ENCODE measurements at regions of chr1 and their contacts with region 1.

Region 1: DNA sequence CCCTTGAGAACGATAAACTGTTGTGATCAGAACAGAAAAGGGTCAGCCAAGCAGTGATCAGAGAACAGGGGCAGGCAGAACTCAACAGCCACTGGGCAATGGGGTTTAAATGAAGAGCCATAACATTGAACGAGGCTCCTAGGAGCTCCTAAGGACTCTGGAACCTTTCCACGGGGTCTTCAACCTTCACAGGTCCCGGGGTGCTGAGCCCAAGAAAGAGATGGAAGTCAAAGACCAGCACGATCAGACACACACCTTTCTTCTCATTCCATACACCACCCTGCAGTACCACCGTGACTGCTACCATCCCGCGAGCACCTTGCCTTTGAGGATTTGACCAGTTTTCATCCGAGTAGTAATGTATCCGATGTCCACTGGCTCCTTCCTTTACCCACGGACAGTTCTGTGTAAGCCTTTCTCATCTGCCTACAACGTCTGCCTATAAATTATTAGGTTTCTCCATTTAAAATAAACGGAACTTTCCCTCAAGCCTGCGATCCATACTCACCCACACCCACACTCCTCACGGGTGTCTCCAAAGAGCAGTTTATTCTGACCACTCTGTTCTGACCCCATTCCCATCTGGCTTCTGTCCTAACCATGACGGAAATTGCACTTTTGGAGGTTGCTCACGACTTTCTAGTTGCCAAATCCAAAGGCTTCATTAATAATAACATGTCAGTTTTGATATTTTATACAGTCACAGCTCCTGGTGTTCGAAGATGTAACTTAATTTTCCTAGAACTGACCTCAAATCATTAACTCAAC is 16.8 kb upstream of the HHAT start:
- DNase-seq: no peak
- H3K4me3 ChIP-seq: no peak overlapping the region
- H3K27ac ChIP-seq: no peak overlapping the region
- H3K4me1 ChIP-seq: peaks cover 6% of the 10 kb centered on the region
- H3K27me3 ChIP-seq: peaks cover 0 to 2% of the 10 kb centered on the region in 2 experiments
- CTCF ChIP-seq: no peak
- POLR2A ChIP-seq: no peak

Region 2: DNA sequence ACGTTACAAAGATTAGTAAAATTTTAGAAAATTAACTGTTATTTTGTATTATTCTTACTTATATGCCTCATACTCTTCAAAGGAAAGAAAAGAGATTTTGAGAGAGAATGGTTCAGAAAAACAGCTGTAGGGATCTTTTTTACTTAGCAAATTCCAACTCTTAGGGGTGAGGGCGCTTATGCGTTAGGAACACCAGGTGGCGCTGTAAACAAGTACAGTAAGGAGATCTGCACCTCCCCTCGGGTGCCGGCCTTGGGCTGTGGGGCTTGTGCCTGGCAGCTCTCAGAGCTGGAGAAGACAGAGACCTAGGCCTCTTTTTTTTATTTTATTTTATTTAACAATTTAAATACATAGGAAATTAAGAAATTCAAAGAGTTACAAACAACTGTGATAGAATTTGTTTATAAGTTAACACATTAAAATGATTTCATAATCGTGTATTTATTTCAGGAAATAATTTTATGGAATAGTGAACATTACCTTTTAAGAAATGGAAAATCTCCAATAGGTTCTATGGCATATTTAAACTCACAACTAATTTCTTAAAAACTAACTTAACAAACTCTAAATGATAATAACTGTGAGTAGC is 451.5 kb before region 1 on chr1:
- CTCF ChIA-PET with region 1: no interaction called
- POLR2A ChIA-PET with region 1: no interaction called
- dilution Hi-C with region 1: no loop called
- intact Hi-C with region 1: loop called (anchors 1 kb)
- DNase-seq: peak; percentile 78
- H3K4me3 ChIP-seq: no peak overlapping the region
- H3K27ac ChIP-seq: no peak overlapping the region
- H3K4me1 ChIP-seq: peaks cover 2% of the 10 kb centered on the region
- H3K27me3 ChIP-seq: peaks cover 11% of the 10 kb centered on the region in 2 experiments
- CTCF ChIP-seq: peak; percentile 83 to 85
- POLR2A ChIP-seq: no peak

Region 3: GRCh38 chr1:209989525-209989924 is 322.4 kb before region 1 on chr1:
- CTCF ChIA-PET with region 1: no interaction called
- POLR2A ChIA-PET with region 1: no interaction called
- dilution Hi-C with region 1: no loop called
- intact Hi-C with region 1: loop called (anchors 1 kb)
- DNase-seq: peak; percentile 31
- H3K4me3 ChIP-seq: no peak overlapping the region
- H3K27ac ChIP-seq: no peak overlapping the region
- H3K4me1 ChIP-seq: no peaks in the 10 kb centered on the region
- H3K27me3 ChIP-seq: peaks cover 3 to 14% of the 10 kb centered on the region in 2 experiments
- CTCF ChIP-seq: no peak
- POLR2A ChIP-seq: no peak

Region 4: DNA sequence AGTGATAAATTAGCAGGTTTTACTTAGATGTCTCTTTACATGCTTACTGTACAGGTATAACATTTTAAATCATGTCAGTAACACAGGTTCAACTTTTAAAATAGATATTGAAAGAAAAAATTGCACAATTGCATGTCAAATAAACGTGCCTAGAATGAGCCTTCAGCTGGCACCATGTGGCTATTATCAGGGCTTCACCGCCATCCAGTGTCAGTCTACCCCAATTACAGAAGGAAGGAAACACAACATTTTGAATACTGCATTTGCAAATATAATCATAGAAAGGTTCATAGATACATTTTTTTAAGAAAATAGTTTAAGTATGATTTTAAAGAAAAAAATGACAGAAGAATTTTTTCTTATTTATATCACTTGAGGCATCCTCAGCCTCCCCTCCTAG is 126.8 kb before region 1 on chr1:
- CTCF ChIA-PET with region 1: no interaction called
- POLR2A ChIA-PET with region 1: no interaction called
- dilution Hi-C with region 1: no loop called
- intact Hi-C with region 1: no loop called
- DNase-seq: no peak
- H3K4me3 ChIP-seq: no peak overlapping the region
- H3K27ac ChIP-seq: no peak overlapping the region
- H3K4me1 ChIP-seq: no peaks in the 10 kb centered on the region
- H3K27me3 ChIP-seq: no peaks in the 10 kb centered on the region
- CTCF ChIP-seq: no peak
- POLR2A ChIP-seq: no peak

Region 5: GRCh38 chr1:210200124-210200736 is 111.7 kb before region 1 on chr1:
- CTCF ChIA-PET with region 1: interaction called, 14 read pairs
- POLR2A ChIA-PET with region 1: no interaction called
- dilution Hi-C with region 1: no loop called
- intact Hi-C with region 1: loop called (anchors 1 kb)
- DNase-seq: no peak
- H3K4me3 ChIP-seq: no peak overlapping the region
- H3K27ac ChIP-seq: no peak overlapping the region
- H3K4me1 ChIP-seq: no peaks in the 10 kb centered on the region
- H3K27me3 ChIP-seq: no peaks in the 10 kb centered on the region
- CTCF ChIP-seq: no peak
- POLR2A ChIP-seq: no peak

Region 6: GRCh38 chr1:210239349-210240111 is 72.4 kb before region 1 on chr1:
- CTCF ChIA-PET with region 1: interaction called, 7 read pairs
- POLR2A ChIA-PET with region 1: no interaction called
- dilution Hi-C with region 1: no loop called
- intact Hi-C with region 1: loop called (anchors 1 kb)
- DNase-seq: peak; percentile 92
- H3K4me3 ChIP-seq: peak overlapping the region in 1 of 3 experiments; percentile 28
- H3K27ac ChIP-seq: peak overlapping the region; percentile 85
- H3K4me1 ChIP-seq: peaks cover 48% of the 10 kb centered on the region
- H3K27me3 ChIP-seq: no peaks in the 10 kb centered on the region
- CTCF ChIP-seq: peak; percentile 62 to 63
- POLR2A ChIP-seq: peak; percentile 20

Region 7: GRCh38 chr1:210280221-210280620 is 31.7 kb before region 1 on chr1:
- CTCF ChIA-PET with region 1: no interaction called
- POLR2A ChIA-PET with region 1: no interaction called
- dilution Hi-C with region 1: no loop called
- intact Hi-C with region 1: no loop called
- DNase-seq: no peak
- H3K4me3 ChIP-seq: no peak overlapping the region
- H3K27ac ChIP-seq: no peak overlapping the region
- H3K4me1 ChIP-seq: no peaks in the 10 kb centered on the region
- H3K27me3 ChIP-seq: peaks cover 0 to 3% of the 10 kb centered on the region in 2 experiments
- CTCF ChIP-seq: no peak
- POLR2A ChIP-seq: no peak

Region 8: GRCh38 chr1:210328746-210329503 is 17.0 kb after region 1 on chr1 and contains the start of gene HHAT:
- CTCF ChIA-PET with region 1: interaction called, 3 read pairs
- POLR2A ChIA-PET with region 1: no interaction called
- dilution Hi-C with region 1: no loop called
- intact Hi-C with region 1: loop called (anchors 1 kb)
- DNase-seq: peak; percentile 59
- H3K4me3 ChIP-seq: peak within 1 kb of the TSS; percentile 46 to 82 (median 55)
- H3K27ac ChIP-seq: peak within 1 kb of the TSS; percentile 75
- H3K4me1 ChIP-seq: peaks cover 6% of the 10 kb centered on the region
- H3K27me3 ChIP-seq: peaks cover 0 to 2% of the 10 kb centered on the region in 2 experiments
- CTCF ChIP-seq: no peak
- POLR2A ChIP-seq: no peak
- total RNA-seq, gene HHAT: 2.4 TPM in 2 replicates

Region 9: DNA sequence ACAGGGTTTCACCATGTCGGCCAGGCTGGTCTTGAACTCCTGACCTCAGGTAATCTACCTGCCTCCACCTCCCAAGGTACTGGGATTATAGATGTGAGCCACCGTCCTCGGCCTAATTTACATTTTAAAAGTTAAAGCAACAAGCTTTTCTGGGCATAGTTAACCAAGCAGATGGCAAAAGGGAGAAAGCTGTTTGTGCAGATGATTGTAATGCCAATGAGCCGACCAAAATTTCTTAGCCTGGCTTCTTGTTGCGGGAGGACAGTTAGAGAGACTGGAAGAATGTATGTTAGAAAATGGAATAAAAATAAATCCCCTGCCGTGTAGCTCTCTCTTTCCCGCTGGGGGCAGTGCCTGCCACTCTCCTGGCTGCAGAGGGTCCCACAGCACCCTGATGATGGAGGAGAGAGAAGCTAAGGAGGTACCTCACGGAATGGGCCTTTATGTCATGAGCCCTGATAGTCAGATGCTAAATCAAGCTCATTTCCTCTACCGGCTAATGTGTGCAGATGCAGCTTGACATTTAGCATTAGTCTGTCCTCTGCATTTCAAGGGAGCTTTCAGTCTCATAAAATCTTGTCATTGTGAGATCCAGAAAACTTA is 104.0 kb after region 1 on chr1:
- CTCF ChIA-PET with region 1: no interaction called
- POLR2A ChIA-PET with region 1: no interaction called
- dilution Hi-C with region 1: no loop called
- intact Hi-C with region 1: no loop called
- DNase-seq: no peak
- H3K4me3 ChIP-seq: no peak overlapping the region
- H3K27ac ChIP-seq: no peak overlapping the region
- H3K4me1 ChIP-seq: no peaks in the 10 kb centered on the region
- H3K27me3 ChIP-seq: no peaks in the 10 kb centered on the region
- CTCF ChIP-seq: no peak
- POLR2A ChIP-seq: no peak

Measured in endothelial cell of umbilical vein (primary cell).